OCI-LY7 (cell line): ENCODE measurements at regions of chr9 and their contacts with region 1.

Region 1: GRCh38 chr9:33189331-33189791 is 22.2 kb upstream of the B4GALT1 start:
- DNase-seq: no peak
- H3K4me3 ChIP-seq: no peak overlapping the region
- H3K27ac ChIP-seq: no peak overlapping the region
- H3K4me1 ChIP-seq: peaks cover 11% of the 10 kb centered on the region
- CTCF ChIP-seq: no peak

Region 2: GRCh38 chr9:33044127-33044673 is 145.2 kb before region 1 on chr9:
- CTCF ChIA-PET with region 1: interaction called, 10 read pairs
- POLR2A ChIA-PET with region 1: no interaction called
- intact Hi-C with region 1: no loop called
- DNase-seq: no peak
- H3K4me3 ChIP-seq: no peak overlapping the region
- H3K27ac ChIP-seq: no peak overlapping the region
- H3K4me1 ChIP-seq: no peaks in the 10 kb centered on the region
- CTCF ChIP-seq: no peak

Region 3: DNA sequence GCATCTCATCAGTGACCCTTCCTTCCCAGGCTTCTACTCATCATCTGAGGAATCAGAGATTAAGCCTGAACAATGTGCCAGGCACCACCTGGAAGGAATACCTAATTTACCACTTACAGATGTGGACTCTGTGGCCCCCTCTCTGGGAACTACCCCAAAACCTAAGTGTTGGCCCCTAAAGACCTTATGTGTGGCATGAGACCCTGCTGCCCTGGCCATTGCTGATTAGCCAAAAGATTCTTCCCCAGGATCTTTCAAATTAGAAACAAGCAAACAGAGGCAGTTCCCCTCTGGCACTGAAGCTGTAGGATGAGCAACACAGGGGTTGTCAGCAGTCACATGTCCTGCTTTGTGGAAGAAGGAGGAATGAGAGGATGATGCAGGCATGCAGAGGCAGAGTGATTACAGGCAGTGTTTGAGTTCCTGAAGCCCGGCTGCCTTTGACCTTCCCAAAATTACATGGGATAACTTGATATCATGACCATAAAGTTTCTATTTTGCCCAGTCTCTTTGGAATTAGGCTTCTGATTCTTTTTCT is 61.2 kb after region 1 on chr9:
- CTCF ChIA-PET with region 1: no interaction called
- POLR2A ChIA-PET with region 1: no interaction called
- intact Hi-C with region 1: no loop called
- DNase-seq: no peak
- H3K4me3 ChIP-seq: no peak overlapping the region
- H3K27ac ChIP-seq: peak overlapping the region; percentile 0
- H3K4me1 ChIP-seq: peaks cover 24% of the 10 kb centered on the region
- CTCF ChIP-seq: no peak